Gastrocnemius medialis (tissue), 4 donors: ENCODE measurements at regions of chr11 and their contacts with region 1.

Region 1: DNA sequence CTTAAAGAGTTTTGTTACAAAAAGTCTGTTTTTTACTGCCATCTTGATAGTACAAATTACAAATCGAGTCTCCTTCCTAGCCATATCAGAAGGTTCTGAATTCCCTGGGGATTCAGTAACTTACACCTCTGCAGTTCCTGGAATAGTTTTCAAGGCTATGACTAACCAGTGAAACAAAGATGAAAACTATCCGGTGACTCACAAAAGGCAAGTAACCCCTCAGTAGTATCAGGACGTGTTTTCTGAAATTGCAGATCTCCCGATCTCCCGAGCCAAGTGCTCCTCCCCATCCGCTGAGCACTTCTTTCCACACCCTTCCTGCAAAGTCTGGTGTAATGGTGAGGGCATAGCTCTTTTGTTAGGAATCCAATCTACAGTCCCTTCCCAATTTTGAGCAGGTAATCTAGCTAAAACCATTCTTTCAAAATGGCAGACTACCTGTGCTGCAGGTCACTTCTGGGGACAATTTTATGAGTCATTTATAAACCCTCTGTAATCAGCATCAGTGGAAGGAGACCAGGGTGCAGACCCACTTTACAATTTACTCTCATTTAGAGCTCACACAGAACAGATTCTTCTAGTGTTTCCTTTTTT is 7.7 kb downstream of the E2F8 start:
- DNase-seq: peak in 1 of 2 donors; percentile 32
- ATAC-seq: peak; percentile 75 to 79
- H3K4me3 ChIP-seq: no peak overlapping the region
- H3K27ac ChIP-seq: peak overlapping the region; percentile 71 to 88 (median 73)
- H3K4me1 ChIP-seq: peaks cover 42 to 64% of the 10 kb centered on the region in 2 donors
- H3K27me3 ChIP-seq: no peaks in the 10 kb centered on the region
- CTCF ChIP-seq: no peak
- POLR2A ChIP-seq: no peak

Region 2: GRCh38 chr11:19201737-19202605 is 31.0 kb before region 1 on chr11 and contains the start of gene CSRP3:
- in situ Hi-C with region 1: no loop called
- intact Hi-C with region 1: loop called (anchors 1 kb)
- DNase-seq: peak; percentile 71 to 84
- ATAC-seq: peak; percentile 86 to 91
- H3K4me3 ChIP-seq: peak within 1 kb of the TSS; percentile 30 to 42 (median 36)
- H3K27ac ChIP-seq: peak within 1 kb of the TSS; percentile 90 to 94 (median 94)
- H3K4me1 ChIP-seq: peaks cover 37 to 39% of the 10 kb centered on the region in 2 donors
- H3K27me3 ChIP-seq: no peaks in the 10 kb centered on the region
- CTCF ChIP-seq: peak in 1 of 5 experiments; percentile 13
- POLR2A ChIP-seq: peak; percentile 43 to 66
- total RNA-seq, gene CSRP3: 2.2 to 300 (median 89.5) TPM